MCF 10A (cell line): ENCODE measurements at regions of chr6 and their contacts with region 1.

Region 1: GRCh38 chr6:80535914-80536565 is 429.6 kb downstream of the BCKDHB start:
- DNase-seq: peak; percentile 84
- H3K4me3 Mint-ChIP-seq: no peak overlapping the region
- H3K27ac Mint-ChIP-seq: peak overlapping the region; percentile 97
- H3K4me1 Mint-ChIP-seq: peaks cover 52% of the 10 kb centered on the region
- H3K27me3 Mint-ChIP-seq: no peaks in the 10 kb centered on the region
- CTCF ChIP-seq: no peak

Region 2: DNA sequence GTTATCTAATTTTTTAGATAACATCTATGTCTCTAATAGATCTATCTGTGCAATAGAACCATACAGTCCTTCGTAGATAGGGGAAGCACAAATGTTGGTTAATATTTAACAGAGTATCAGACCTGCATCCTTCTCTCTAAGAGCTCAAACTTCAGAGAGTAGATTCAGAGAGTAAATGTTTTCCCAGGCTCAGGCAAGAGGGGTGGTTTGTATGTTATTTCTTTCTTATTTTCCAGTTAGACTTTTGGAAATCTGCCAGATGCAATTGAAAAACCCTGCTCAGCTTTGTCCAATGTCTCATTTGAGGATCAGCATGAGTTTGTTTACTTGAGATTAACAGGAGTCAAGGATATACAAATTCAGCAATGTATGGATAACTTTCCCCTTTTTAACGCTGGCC is 67.6 kb before region 1 on chr6:
- CTCF ChIA-PET with region 1: no interaction called
- POLR2A ChIA-PET with region 1: no interaction called
- intact Hi-C with region 1: no loop called
- DNase-seq: no peak
- H3K4me3 Mint-ChIP-seq: no peak overlapping the region
- H3K27ac Mint-ChIP-seq: no peak overlapping the region
- H3K4me1 Mint-ChIP-seq: no peaks in the 10 kb centered on the region
- H3K27me3 Mint-ChIP-seq: no peaks in the 10 kb centered on the region
- CTCF ChIP-seq: no peak

Region 3: DNA sequence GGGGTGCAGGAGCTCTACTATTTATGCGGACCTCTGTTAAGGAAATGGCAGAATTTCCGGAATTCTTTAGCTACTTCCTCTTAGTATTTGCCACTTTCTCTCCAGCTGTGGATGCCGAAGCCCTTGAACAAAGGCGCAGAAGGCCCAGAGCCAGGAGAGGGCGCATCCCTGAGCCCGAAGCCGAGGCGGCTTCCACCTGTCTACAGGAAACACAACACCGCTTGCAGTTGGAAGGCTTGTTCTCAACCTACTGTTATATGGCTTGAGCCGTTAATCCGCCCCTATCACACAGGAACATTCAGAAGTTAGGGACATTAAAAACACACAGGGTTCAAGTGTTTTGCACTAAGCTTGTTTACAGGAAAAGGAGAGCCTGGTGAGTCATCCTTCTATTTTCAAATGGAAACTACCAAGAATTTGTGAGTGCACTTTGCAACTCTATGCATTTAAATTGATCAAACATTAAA is 12.5 kb before region 1 on chr6:
- CTCF ChIA-PET with region 1: interaction called, 4 read pairs
- POLR2A ChIA-PET with region 1: interaction called, 12 read pairs
- intact Hi-C with region 1: no loop called
- DNase-seq: no peak
- H3K4me3 Mint-ChIP-seq: no peak overlapping the region
- H3K27ac Mint-ChIP-seq: peak overlapping the region; percentile 14
- H3K4me1 Mint-ChIP-seq: peaks cover 11% of the 10 kb centered on the region
- H3K27me3 Mint-ChIP-seq: no peaks in the 10 kb centered on the region
- CTCF ChIP-seq: no peak

Region 4: DNA sequence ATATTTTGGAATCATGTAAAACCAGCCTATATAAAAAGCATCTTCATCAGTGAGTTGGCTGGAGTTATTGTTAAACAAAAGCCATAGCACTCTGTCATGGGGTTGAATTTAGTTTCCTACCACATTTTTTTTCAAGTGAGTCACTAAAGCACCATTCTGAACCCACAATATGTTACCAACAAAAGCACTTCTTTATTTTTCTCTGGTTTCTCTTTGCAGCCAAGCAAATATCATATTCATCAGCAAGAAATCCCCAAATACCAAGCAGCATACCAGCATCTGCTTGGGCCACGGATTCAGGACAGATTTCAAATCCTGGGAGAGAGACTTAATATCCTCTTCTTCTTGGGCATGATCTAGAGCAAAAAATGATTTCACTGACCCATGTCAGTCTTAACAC is 11.8 kb after region 1 on chr6:
- CTCF ChIA-PET with region 1: interaction called, 3 read pairs
- POLR2A ChIA-PET with region 1: interaction called, 12 read pairs
- intact Hi-C with region 1: no loop called
- DNase-seq: peak; percentile 36
- H3K4me3 Mint-ChIP-seq: peak overlapping the region; percentile 51
- H3K27ac Mint-ChIP-seq: peak overlapping the region; percentile 68
- H3K4me1 Mint-ChIP-seq: peaks cover 58% of the 10 kb centered on the region
- H3K27me3 Mint-ChIP-seq: no peaks in the 10 kb centered on the region
- CTCF ChIP-seq: no peak